ENCODE measurements at regions of chr21 and their contacts with region 1.

Region 1: DNA sequence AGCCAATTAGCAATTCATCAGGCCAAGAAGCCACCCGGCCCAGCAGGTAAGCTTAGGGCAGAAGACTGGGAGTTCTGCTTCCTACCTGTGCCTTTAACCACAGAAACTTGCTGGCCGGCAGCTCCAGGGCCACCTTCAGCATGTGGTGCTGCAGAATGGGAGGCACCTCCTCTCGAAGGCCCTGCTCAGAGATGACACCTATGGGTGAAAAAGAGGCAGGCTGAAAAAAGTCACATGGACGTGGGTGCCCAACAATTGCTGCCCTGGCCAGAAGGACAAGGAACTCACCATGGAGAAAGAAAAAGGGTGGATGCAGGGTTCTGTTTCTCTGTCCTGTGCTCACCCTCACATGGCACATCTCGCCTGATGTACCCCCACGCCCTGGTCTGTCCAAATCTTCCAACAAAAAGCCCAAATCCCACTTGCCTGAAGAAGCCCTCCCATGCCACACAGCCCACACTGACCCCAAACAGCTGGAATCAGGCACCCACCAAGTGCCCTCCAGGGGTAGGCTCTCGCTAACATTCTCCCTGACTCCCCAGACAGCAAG is 33.0 kb downstream of the URB1 start:
- DNase-seq: no peak
- ATAC-seq: no peak
- H3K4me3 ChIP-seq: no peak overlapping the region
- H3K27ac ChIP-seq: no peak overlapping the region
- H3K4me1 ChIP-seq: no peaks in the 10 kb centered on the region
- H3K27me3 ChIP-seq: no peaks in the 10 kb centered on the region
- CTCF ChIP-seq: no peak

Region 2: DNA sequence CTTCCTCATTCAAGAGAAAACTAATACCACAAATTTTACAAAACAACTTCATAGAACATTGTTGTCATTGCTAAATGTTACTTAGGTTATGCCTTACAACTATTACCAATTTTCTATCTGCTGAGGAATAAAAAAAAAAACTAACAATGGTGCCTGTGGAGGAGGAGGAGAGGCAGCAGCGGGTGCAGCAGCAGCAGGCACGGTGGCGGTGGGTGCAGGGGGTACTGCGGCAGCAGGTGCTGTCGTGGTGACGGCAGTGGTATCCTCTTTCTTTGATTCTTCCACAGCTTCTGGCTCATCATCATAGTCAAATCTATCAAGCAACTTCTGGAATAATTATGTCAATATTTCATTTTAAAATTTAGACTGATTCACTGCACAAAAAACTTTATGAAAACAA is 663.4 kb before region 1 on chr21:
- intact Hi-C with region 1: loop called in 1 of 2 experiments (anchors 10 kb)
- DNase-seq: no peak
- ATAC-seq: no peak
- H3K4me3 ChIP-seq: no peak overlapping the region
- H3K27ac ChIP-seq: no peak overlapping the region
- H3K4me1 ChIP-seq: no peaks in the 10 kb centered on the region
- H3K27me3 ChIP-seq: no peaks in the 10 kb centered on the region
- CTCF ChIP-seq: no peak

Region 3: DNA sequence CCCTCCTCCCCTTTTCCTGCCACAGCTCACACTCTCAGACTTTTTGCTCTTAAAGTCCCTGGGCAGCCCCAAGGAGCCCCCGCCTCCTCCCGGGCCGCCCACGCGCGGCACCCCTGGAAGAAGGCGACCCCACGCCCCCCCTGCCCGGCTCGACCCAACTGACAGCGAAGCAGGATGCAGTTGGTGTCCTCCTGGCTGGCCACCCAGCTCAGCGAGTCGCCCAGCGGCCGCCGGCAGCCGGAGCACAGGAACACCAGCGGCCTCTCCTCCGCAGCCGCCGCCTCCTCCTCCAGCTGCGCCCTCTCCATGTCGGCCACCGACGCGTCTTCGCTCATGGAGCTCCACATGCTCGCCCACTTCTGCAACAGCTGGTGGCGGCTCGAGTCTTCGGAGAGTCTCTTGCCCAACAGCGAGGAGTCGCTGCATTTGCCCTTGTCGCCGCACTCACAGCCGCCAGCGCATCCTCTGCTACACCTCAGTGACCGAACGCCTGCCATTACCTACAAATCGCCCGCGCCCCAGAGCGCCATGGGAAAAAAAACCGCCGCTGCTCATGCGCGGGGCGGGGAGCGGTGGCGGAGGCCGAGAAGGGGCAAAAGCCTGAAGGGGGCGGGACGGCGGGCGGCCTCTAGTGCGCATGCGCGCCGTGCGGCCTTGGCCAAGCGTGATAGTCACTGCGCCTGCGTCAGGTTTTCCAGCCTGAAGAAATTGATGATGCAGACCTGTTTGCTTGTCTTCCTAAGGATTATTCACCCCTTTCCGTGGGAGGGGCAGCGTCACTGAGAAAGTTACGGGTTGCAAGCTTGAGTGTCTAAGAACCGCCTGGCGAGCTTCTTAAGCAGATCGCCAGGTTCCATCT is 81.0 kb before region 1 on chr21 and contains the start of gene MIS18A:
- intact Hi-C with region 1: no loop called
- DNase-seq: peak; percentile 95 to 98
- ATAC-seq: peak; percentile 97 to 100 (median 98)
- H3K4me3 ChIP-seq: peak within 1 kb of the TSS; percentile 80
- H3K27ac ChIP-seq: peak within 1 kb of the TSS; percentile 57
- H3K4me1 ChIP-seq: peaks cover 9% of the 10 kb centered on the region
- H3K27me3 ChIP-seq: no peaks in the 10 kb centered on the region
- CTCF ChIP-seq: no peak
- total RNA-seq, gene MIS18A: 0.92 to 2.2 (median 1.4) TPM

Region 4: GRCh38 chr21:32545948-32546441 is 186.2 kb after region 1 on chr21:
- intact Hi-C with region 1: no loop called
- DNase-seq: no peak
- ATAC-seq: no peak
- H3K4me3 ChIP-seq: no peak overlapping the region
- H3K27ac ChIP-seq: no peak overlapping the region
- H3K4me1 ChIP-seq: no peaks in the 10 kb centered on the region
- H3K27me3 ChIP-seq: no peaks in the 10 kb centered on the region
- CTCF ChIP-seq: no peak

Region 5: DNA sequence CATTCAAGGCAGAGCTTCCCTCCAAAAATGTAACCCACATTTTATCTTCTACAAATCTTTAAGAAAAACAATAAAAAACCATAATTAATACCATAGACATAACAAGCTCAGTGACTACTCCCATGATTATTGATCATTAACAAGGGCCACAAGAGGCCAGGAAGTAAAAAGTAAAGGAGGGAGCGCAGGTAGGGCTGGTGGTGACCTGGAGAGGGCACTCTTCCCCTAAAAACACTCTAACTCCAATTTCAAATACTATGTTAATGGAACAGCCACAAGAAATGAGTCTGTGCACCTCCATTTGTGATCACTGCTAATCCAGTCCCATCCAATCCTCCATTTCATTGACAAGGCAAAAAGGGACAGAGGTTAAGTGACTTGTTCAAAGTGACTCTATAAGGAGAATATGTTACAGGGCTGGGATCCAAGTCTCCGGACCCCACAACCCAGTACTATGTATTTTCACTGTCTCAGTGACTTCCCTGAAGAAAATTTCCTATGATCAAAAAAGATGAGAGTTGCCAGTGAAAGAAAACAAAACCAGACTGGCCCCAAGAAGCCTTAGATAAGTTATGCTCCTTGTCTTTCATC is 293.6 kb after region 1 on chr21:
- intact Hi-C with region 1: no loop called
- DNase-seq: no peak
- ATAC-seq: peak in 1 of 4 donors; percentile 56
- H3K4me3 ChIP-seq: no peak overlapping the region
- H3K27ac ChIP-seq: no peak overlapping the region
- H3K4me1 ChIP-seq: no peaks in the 10 kb centered on the region
- H3K27me3 ChIP-seq: no peaks in the 10 kb centered on the region
- CTCF ChIP-seq: peak; percentile 53

Region 6: GRCh38 chr21:32747396-32747795 is 387.6 kb after region 1 on chr21:
- intact Hi-C with region 1: loop called in 1 of 2 experiments (anchors 10 kb)
- DNase-seq: no peak
- ATAC-seq: no peak
- H3K4me3 ChIP-seq: no peak overlapping the region
- H3K27ac ChIP-seq: no peak overlapping the region
- H3K4me1 ChIP-seq: no peaks in the 10 kb centered on the region
- H3K27me3 ChIP-seq: no peaks in the 10 kb centered on the region
- CTCF ChIP-seq: no peak

Measured in psoas muscle (tissue), 8 donors.